ENCODE measurements at regions of chr17 and their contacts with region 1.

Region 1: DNA sequence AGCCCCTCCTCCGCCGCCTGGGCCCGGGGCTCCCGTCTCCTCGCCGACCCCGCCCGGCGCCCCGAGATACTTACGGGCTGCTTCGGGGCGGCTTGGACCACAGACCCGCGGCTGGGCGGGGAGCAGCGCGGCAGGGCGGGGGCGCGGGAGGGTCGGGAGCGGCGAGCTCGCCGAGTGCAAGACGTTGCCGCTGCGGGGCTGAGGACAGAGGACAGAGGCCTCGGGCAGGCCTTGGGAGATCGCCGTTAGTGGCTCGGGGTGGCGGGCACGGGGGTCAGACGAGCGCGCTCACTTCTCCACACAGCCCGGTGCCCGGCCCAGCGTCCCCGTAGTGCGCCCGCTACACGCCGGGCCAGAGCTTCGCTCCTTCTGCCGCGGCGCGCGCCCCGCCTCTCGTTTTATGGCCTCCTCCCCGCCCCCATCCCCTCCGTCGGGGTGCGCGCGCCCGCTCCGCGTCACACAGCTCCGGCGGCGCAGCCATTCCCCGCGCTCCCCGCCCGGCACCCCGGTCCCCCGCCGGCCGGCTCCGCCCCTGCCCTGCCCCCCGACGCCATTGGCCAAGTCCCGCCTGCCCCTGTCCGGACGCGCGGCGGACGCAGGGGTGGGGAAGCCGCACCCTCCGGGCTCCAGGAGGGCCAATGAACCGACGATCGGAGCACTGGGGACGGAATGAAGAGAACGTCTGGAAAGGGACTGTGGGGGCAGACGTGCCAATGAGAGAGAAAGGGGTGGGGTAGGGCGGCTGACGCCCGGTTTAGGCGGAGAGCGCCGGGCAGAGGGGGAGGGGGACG is at the start of gene TOB1:
- DNase-seq: peak; percentile 100
- H3K4me3 ChIP-seq: peak within 1 kb of the TSS; percentile 96
- H3K4me3 Mint-ChIP-seq: peak within 1 kb of the TSS; percentile 79
- H3K27ac Mint-ChIP-seq: peak within 1 kb of the TSS; percentile 95
- H3K4me1 ChIP-seq: peaks cover 15% of the 10 kb centered on the region
- H3K4me1 Mint-ChIP-seq: peaks cover 23% of the 10 kb centered on the region
- H3K27me3 ChIP-seq: no peaks in the 10 kb centered on the region
- H3K27me3 Mint-ChIP-seq: no peaks in the 10 kb centered on the region
- CTCF ChIP-seq: no peak
- total RNA-seq, gene TOB1: 114 TPM in 2 replicates

Region 2: DNA sequence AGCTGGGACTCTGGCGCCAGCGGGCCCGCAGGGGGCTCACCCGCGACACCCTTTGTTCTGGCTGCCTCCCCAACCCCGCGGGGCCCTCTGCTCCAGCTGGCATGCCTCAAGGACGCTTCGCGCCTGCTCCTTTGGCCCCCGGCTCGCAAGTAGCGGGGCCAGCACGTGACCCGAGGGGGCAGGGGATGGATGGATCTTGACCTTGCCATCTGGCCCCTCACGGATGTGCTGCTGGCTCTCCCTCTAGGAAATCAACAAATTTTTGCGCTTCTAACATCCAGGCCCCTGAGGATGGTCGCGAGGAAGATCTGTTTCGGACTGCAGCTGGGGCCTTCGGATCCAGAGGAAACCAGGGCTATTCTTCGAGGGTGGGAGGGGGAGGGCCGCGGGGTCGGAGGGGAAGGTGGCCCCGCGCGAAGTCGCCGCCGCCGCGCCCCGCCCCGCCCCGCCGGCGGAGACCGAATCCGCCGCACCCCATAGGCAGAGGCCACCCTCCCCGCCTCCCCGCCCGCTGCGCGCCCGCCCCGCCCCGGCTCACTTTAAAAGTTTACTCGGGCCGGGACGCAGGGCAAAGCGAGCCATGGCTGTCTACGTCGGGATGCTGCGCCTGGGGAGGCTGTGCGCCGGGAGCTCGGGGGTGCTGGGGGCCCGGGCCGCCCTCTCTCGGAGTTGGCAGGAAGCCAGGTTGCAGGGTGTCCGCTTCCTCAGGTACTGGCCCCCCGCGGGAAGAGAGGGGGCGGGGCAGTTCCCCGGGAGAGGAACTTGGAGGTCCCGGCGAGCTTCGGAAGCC is 440.3 kb before region 1 on chr17 and contains the start of gene ACSF2:
- CTCF ChIA-PET with region 1: no interaction called
- POLR2A ChIA-PET with region 1: interaction called, 10 read pairs
- intact Hi-C with region 1: no loop called
- DNase-seq: peak; percentile 92 to 93
- H3K4me3 ChIP-seq: peak within 1 kb of the TSS; percentile 74
- H3K4me3 Mint-ChIP-seq: peak within 1 kb of the TSS; percentile 80
- H3K27ac Mint-ChIP-seq: peak within 1 kb of the TSS; percentile 54
- H3K4me1 ChIP-seq: peaks cover 64% of the 10 kb centered on the region
- H3K4me1 Mint-ChIP-seq: peaks cover 60% of the 10 kb centered on the region
- H3K27me3 ChIP-seq: no peaks in the 10 kb centered on the region
- H3K27me3 Mint-ChIP-seq: no peaks in the 10 kb centered on the region
- CTCF ChIP-seq: peak in 1 of 2 experiments; percentile 35
- total RNA-seq, gene ACSF2: 135 and 161 TPM in 2 replicates

Region 3: GRCh38 chr17:50783193-50783660 is 83.0 kb before region 1 on chr17:
- CTCF ChIA-PET with region 1: interaction called, 7 read pairs
- POLR2A ChIA-PET with region 1: interaction called, 21 read pairs
- intact Hi-C with region 1: no loop called
- DNase-seq: peak; percentile 98 to 100
- H3K4me3 ChIP-seq: no peak overlapping the region
- H3K4me3 Mint-ChIP-seq: no peak overlapping the region
- H3K27ac Mint-ChIP-seq: no peak overlapping the region
- H3K4me1 ChIP-seq: no peaks in the 10 kb centered on the region
- H3K4me1 Mint-ChIP-seq: peaks cover 11% of the 10 kb centered on the region
- H3K27me3 ChIP-seq: no peaks in the 10 kb centered on the region
- H3K27me3 Mint-ChIP-seq: no peaks in the 10 kb centered on the region
- CTCF ChIP-seq: peak; percentile 100

Region 4: GRCh38 chr17:50893183-50893993 is 27.2 kb after region 1 on chr17:
- CTCF ChIA-PET with region 1: interaction called, 4 read pairs
- POLR2A ChIA-PET with region 1: interaction called, 296 read pairs
- intact Hi-C with region 1: loop called (anchors 1 kb)
- DNase-seq: peak; percentile 56 to 70
- H3K4me3 ChIP-seq: no peak overlapping the region
- H3K4me3 Mint-ChIP-seq: peak overlapping the region; percentile 1
- H3K27ac Mint-ChIP-seq: peak overlapping the region; percentile 72
- H3K4me1 ChIP-seq: peaks cover 58% of the 10 kb centered on the region
- H3K4me1 Mint-ChIP-seq: peaks cover 68% of the 10 kb centered on the region
- H3K27me3 ChIP-seq: no peaks in the 10 kb centered on the region
- H3K27me3 Mint-ChIP-seq: no peaks in the 10 kb centered on the region
- CTCF ChIP-seq: no peak

Region 5: GRCh38 chr17:50918933-50919296 is 52.7 kb after region 1 on chr17:
- CTCF ChIA-PET with region 1: interaction called, 4 read pairs
- POLR2A ChIA-PET with region 1: interaction called, 28 read pairs
- intact Hi-C with region 1: no loop called
- DNase-seq: no peak
- H3K4me3 ChIP-seq: no peak overlapping the region
- H3K4me3 Mint-ChIP-seq: no peak overlapping the region
- H3K27ac Mint-ChIP-seq: no peak overlapping the region
- H3K4me1 ChIP-seq: peaks cover 56% of the 10 kb centered on the region
- H3K4me1 Mint-ChIP-seq: peaks cover 23% of the 10 kb centered on the region
- H3K27me3 ChIP-seq: no peaks in the 10 kb centered on the region
- H3K27me3 Mint-ChIP-seq: no peaks in the 10 kb centered on the region
- CTCF ChIP-seq: no peak

Region 6: DNA sequence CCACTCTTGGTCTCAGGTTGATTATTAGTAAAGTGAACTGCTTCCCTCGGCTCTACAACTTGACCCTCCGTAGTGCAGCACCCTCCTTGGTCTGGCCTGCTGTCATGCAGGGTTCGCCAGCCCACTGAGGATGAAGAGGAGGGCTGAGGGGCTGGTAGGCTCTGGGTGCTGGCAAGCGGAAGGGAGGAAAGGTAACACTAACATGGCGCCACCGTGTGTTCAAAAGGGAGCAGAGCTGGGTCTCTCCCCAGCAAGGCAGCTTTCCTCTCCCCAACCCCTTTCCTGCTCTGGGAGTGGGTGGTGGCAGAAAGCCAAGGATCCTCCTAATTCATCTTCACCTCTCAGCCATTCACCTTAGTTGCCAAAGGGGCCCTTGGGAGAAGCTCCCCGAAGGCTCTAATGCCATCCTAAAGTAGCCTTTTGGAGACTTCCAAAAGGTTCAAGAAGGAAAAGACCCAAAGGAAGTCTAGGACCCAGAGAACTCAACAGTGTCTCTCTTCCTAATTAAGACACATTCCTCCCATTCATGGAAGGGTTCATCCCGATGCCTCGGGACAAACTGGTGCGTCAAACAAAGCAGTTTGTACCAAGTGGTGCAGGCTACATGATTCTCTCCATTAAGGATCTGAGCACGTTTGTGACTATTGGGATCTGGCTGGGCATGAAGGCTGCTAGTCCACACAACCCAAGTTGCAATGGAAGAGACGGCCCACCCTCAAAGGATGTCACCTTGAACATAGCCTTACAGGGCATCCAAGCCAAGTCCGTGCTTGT is 90.8 kb after region 1 on chr17:
- CTCF ChIA-PET with region 1: interaction called, 18 read pairs
- POLR2A ChIA-PET with region 1: interaction called, 23 read pairs
- intact Hi-C with region 1: no loop called
- DNase-seq: peak; percentile 86 to 87
- H3K4me3 ChIP-seq: no peak overlapping the region
- H3K4me3 Mint-ChIP-seq: no peak overlapping the region
- H3K27ac Mint-ChIP-seq: no peak overlapping the region
- H3K4me1 ChIP-seq: peaks cover 9% of the 10 kb centered on the region
- H3K4me1 Mint-ChIP-seq: peaks cover 13% of the 10 kb centered on the region
- H3K27me3 ChIP-seq: no peaks in the 10 kb centered on the region
- H3K27me3 Mint-ChIP-seq: no peaks in the 10 kb centered on the region
- CTCF ChIP-seq: peak; percentile 96 to 98